ENCODE measurements at regions of chr6 and their contacts with region 1.

Region 1: GRCh38 chr6:167219967-167220512 is 62.3 kb upstream of the GPR31 start:
- DNase-seq: no peak
- ATAC-seq: no peak
- H3K4me3 ChIP-seq: no peak overlapping the region
- H3K27ac ChIP-seq: no peak overlapping the region
- H3K4me1 ChIP-seq: no peaks in the 10 kb centered on the region
- H3K27me3 ChIP-seq: no peaks in the 10 kb centered on the region
- CTCF ChIP-seq: no peak
- POLR2A ChIP-seq: no peak

Region 2: DNA sequence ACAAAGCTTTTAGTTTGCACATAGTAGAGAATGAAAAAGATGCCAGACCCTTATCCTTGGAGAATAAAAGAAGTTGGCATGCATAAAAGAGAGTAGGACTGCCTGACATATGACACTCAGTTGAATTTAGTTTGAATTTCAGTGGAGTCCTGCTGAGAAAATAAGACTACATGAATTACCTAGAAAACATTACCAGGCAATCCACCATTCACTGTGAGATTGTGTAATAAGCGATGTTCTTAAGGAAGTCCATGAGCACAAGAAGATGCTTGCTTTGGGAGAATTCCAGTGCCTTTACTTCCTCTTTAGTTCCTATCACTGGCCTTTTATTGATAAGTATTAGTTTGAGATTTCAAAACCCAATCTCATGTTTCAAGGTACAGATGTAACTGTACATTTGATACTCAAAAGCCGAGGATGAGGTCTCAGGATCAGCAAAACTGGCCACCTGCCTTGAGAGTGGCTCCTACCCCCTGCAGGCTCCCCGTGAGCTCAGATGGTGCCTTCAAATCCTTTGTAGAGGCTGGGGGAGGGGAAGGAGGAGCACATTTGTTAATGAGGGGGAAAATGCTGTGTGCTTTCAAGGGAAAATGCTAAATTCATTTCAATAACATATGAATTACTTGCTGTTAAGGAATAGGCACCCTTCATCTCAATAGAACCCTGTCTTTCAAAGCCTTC is 59.9 kb after region 1 on chr6:
- in situ Hi-C with region 1: no loop called
- intact Hi-C with region 1: loop called (anchors 5 kb)
- DNase-seq: no peak
- ATAC-seq: no peak
- H3K4me3 ChIP-seq: no peak overlapping the region
- H3K27ac ChIP-seq: no peak overlapping the region
- H3K4me1 ChIP-seq: no peaks in the 10 kb centered on the region
- H3K27me3 ChIP-seq: peaks cover 0 to 11% (median 5%) of the 10 kb centered on the region in 3 donors
- CTCF ChIP-seq: no peak
- POLR2A ChIP-seq: no peak

Region 3: DNA sequence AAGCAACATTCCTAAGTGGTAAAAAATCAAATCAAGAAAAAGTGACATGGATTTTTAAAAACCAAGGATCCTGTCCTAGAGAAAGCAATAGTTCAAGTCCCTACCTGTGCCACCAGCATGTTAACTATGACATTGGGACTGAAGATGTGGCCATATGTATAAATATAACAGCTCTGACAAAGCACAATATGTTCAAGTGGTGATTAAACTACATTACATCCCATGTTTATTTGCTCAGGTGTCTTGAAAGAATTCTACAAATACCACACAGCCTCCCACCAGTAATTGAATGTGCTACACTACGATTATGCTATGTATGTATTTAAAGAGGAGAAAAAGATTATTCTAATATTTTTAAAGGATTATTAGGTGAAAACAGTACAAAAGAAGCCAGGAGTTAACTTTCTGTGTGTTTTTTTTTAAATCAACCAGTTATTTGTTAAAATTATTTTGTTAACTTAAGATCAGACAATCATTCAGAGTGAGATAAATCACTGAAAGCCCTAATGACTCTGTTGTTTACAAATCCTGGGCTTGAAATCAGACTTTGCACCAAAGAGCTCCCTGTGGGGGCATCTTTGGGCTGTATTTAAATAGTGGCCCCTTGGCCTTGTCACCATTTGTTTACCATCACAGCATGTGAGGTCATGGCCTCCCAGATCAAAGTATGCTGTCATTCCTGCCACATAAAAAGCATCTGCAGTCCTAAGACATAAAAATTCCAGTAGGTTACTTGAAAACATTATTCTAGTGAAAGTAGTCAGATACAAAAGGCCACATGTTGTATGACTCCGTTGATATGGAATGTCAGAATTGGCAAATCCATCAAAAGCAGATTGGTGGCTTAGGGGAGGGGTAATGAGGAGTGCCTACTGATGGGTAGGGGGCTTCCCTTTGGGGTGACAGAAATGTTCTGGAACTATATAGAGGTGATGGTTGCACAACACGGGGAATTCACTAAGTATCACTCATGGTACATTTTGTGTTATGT is 121.9 kb after region 1 on chr6:
- in situ Hi-C with region 1: no loop called
- intact Hi-C with region 1: no loop called
- DNase-seq: no peak
- ATAC-seq: no peak
- H3K4me3 ChIP-seq: no peak overlapping the region
- H3K27ac ChIP-seq: no peak overlapping the region
- H3K4me1 ChIP-seq: no peaks in the 10 kb centered on the region
- H3K27me3 ChIP-seq: peaks cover 0 to 4% (median 0%) of the 10 kb centered on the region in 3 donors
- CTCF ChIP-seq: no peak
- POLR2A ChIP-seq: no peak

Measured in gastrocnemius medialis (tissue), 4 donors.